Caco-2 (cell line): ENCODE measurements at regions of chr9 and their contacts with region 1.

Region 1: DNA sequence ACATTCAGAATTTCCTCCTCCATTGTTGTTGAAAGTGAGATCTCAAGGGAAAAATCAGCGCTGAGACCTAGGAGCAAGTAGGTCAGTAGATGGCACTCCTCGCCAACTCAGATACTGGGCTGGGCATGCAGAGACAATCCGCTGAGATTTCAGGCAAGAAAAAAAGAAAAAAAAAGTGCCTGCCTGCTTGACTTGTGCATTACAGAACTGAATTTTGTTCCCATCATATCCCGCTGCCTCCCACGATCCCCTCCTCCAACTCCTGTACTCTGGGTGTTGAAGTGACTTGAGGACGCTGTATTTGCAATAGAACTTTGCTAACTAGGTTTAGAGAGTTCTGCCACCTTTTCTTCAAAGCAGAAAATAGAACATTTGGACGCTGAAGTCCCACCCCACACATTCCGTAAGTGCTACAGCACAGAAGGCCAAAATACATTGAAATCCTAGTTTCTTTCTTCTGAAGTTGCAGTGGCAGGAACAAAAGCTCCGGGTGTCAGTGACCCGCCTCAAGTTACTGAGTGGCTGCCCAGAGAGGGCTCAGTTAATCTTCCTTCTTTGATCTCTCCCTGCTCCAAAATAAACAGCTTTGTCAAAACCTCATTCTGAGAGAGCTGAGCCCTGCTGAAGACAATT is 265.8 kb downstream of the MLLT3 start:
- DNase-seq: peak; percentile 65 to 71
- H3K4me3 ChIP-seq: no peak overlapping the region; the same call in 1 of the 2 replicates
- H3K4me3 Mint-ChIP-seq: peak overlapping the region; percentile 51
- H3K27ac Mint-ChIP-seq: peak overlapping the region; percentile 78
- H3K4me1 ChIP-seq: peaks cover 20% of the 10 kb centered on the region
- H3K4me1 Mint-ChIP-seq: peaks cover 11% of the 10 kb centered on the region
- H3K27me3 ChIP-seq: no peaks in the 10 kb centered on the region
- H3K27me3 Mint-ChIP-seq: no peaks in the 10 kb centered on the region
- CTCF ChIP-seq: peak; percentile 53 to 71

Region 2: GRCh38 chr9:20256284-20256948 is 100.1 kb before region 1 on chr9:
- CTCF ChIA-PET with region 1: no interaction called
- POLR2A ChIA-PET with region 1: no interaction called
- intact Hi-C with region 1: no loop called
- DNase-seq: no peak
- H3K4me3 ChIP-seq: no peak overlapping the region
- H3K4me3 Mint-ChIP-seq: no peak overlapping the region
- H3K27ac Mint-ChIP-seq: no peak overlapping the region
- H3K4me1 ChIP-seq: no peaks in the 10 kb centered on the region
- H3K4me1 Mint-ChIP-seq: no peaks in the 10 kb centered on the region
- H3K27me3 ChIP-seq: no peaks in the 10 kb centered on the region
- H3K27me3 Mint-ChIP-seq: no peaks in the 10 kb centered on the region
- CTCF ChIP-seq: no peak

Region 3: DNA sequence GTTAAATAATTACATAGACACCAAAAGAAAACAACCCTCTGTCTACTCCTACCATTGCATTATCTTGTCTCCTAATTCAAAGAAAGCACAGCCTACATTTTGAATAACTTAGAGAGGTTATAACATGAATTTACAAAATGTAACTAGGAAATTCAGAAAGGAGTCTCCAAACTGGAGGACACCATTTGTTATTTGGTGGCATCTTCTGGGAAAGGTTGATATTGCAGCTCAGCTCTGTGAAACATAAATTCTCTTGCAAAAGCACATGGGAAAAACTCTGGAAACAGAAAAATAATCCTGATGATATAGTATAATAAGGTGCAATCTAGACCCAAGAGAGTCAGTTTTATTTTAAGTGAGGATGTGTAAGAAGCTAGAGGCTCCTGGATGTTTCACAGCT is 50.5 kb after region 1 on chr9:
- CTCF ChIA-PET with region 1: no interaction called
- POLR2A ChIA-PET with region 1: no interaction called
- intact Hi-C with region 1: loop called (anchors 1 kb)
- DNase-seq: no peak
- H3K4me3 ChIP-seq: no peak overlapping the region
- H3K4me3 Mint-ChIP-seq: no peak overlapping the region
- H3K27ac Mint-ChIP-seq: no peak overlapping the region
- H3K4me1 ChIP-seq: peaks cover 19% of the 10 kb centered on the region
- H3K4me1 Mint-ChIP-seq: peaks cover 4% of the 10 kb centered on the region
- H3K27me3 ChIP-seq: no peaks in the 10 kb centered on the region
- H3K27me3 Mint-ChIP-seq: no peaks in the 10 kb centered on the region
- CTCF ChIP-seq: peak in 1 of 2 experiments; percentile 10

Region 4: GRCh38 chr9:20684035-20684872 is 327.7 kb after region 1 on chr9 and contains the start of gene FOCAD:
- CTCF ChIA-PET with region 1: interaction called, 5 read pairs
- POLR2A ChIA-PET with region 1: no interaction called
- intact Hi-C with region 1: loop called (anchors 2 kb)
- DNase-seq: peak; percentile 93 to 96
- H3K4me3 ChIP-seq: peak within 1 kb of the TSS; percentile 66
- H3K4me3 Mint-ChIP-seq: peak within 1 kb of the TSS; percentile 74
- H3K27ac Mint-ChIP-seq: peak within 1 kb of the TSS; percentile 79
- H3K4me1 ChIP-seq: peaks cover 16% of the 10 kb centered on the region
- H3K4me1 Mint-ChIP-seq: peaks cover 7% of the 10 kb centered on the region
- H3K27me3 ChIP-seq: no peaks in the 10 kb centered on the region
- H3K27me3 Mint-ChIP-seq: no peaks in the 10 kb centered on the region
- CTCF ChIP-seq: no peak
- total RNA-seq, gene FOCAD: 20.4 TPM in 2 replicates

Region 5: DNA sequence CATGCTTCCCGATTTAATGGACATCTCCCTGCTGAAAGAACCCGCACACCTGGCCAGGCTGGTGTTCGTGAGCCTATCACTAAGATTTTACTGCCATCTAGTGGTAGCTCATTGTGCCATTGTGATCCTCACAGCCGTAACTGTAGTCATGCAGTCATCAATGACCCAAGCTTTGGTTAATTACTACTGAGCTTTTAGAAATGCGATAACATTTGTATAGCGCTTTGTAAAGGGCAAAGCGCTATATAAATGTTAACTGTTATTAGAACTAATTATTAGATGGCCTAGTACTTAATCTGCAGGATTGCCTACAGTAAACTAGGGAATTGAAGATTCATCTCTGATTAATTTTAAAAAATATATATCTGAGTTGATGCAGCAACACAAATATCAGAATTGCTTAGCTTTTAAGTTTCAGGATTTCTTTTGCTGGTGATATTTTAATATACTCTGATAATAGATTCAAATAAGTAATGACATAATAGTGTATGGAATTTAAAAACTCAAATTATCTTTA is 584.7 kb after region 1 on chr9:
- CTCF ChIA-PET with region 1: interaction called, 8 read pairs
- POLR2A ChIA-PET with region 1: no interaction called
- intact Hi-C with region 1: loop called (anchors 1 kb)
- DNase-seq: peak; percentile 56 to 69
- H3K4me3 ChIP-seq: no peak overlapping the region
- H3K4me3 Mint-ChIP-seq: no peak overlapping the region
- H3K27ac Mint-ChIP-seq: no peak overlapping the region
- H3K4me1 ChIP-seq: 0 out of 2 replicates have a peak, but pooled peaks cover 4% of the 10 kb centered on the region
- H3K4me1 Mint-ChIP-seq: no peaks in the 10 kb centered on the region
- H3K27me3 ChIP-seq: no peaks in the 10 kb centered on the region
- H3K27me3 Mint-ChIP-seq: no peaks in the 10 kb centered on the region
- CTCF ChIP-seq: peak; percentile 55 to 71